H1 (cell line): ENCODE measurements at regions of chr18 and their contacts with region 1.

Region 1: GRCh38 chr18:76380791-76381405 is 114.1 kb downstream of the ZNF516 start:
- DNase-seq: peak; percentile 43 to 90
- H3K4me3 ChIP-seq: no peak overlapping the region
- H3K27ac ChIP-seq: no peak overlapping the region
- H3K4me1 ChIP-seq: peaks cover 0 to 3% (median 0%) of the 10 kb centered on the region in 4 experiments; a peak in 4 of 7 replicates
- H3K27me3 ChIP-seq: no peaks in the 10 kb centered on the region
- CTCF ChIP-seq: peak; percentile 92 to 99 (median 97)
- EP300 ChIP-seq: no peak
- POLR2A ChIP-seq: no peak
- RAD21 ChIP-seq: peak; percentile 56 to 65

Region 2: DNA sequence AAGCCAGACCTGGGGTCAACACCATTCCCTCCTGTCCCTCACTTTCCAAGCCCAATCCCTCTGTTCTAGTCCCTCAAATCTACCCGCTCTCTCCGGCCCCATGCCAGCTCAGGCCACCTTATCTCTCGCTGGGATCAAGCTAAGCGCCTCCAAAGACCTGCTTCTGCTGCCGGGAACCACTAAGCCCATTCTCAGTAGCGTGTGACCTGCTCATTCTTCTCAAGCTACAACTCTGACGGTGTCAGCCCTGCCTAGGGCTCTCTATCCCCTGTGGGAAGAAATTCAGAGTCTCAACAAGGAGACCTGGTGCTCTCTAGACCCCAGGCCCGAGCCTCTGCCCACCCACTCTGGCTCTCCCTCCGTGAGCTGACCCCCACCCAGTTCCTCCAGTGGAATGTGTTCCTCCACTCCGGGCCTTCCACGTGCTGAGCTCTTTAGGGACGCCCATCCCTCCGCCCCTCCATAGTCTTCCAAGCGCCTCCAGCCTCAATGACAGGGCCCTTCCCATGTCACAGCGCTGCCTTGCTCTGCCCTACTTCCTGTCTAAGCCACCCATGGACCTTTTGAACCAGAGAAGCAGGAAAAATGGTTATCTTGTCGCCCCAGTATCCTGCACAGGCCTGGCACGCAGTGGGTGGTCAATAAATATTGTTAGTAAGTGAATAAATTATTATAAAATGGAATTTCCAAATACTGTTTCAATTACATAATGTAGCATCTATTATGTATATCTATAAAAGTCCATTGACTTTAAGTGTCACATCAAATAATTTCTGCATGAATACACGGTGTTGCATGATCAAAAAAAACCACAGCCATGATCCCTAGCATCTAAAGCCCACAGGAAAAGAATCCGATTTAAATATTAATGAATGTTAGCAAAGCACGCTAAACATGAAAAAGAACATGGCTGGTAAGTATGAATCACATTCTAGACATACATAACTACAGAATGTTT is 13.5 kb before region 1 on chr18:
- CTCF ChIA-PET with region 1: interaction called, 13 read pairs
- POLR2A ChIA-PET with region 1: no interaction called
- DNase-seq: no peak
- H3K4me3 ChIP-seq: no peak overlapping the region
- H3K27ac ChIP-seq: no peak overlapping the region
- H3K4me1 ChIP-seq: peaks cover 0 to 2% (median 0%) of the 10 kb centered on the region in 4 experiments; a peak in 1 of 7 replicates
- H3K27me3 ChIP-seq: no peaks in the 10 kb centered on the region
- CTCF ChIP-seq: no peak
- EP300 ChIP-seq: no peak
- POLR2A ChIP-seq: no peak
- RAD21 ChIP-seq: no peak